PC-3 (cell line): ENCODE measurements at regions of chr5 and their contacts with region 1.

Region 1: GRCh38 chr5:103258368-103258956 is at the start of gene MACIR:
- DNase-seq: peak; percentile 99
- ATAC-seq: peak; percentile 85
- H3K4me3 ChIP-seq: peak within 1 kb of the TSS; percentile 93
- H3K27ac ChIP-seq: peak within 1 kb of the TSS; percentile 63
- H3K4me1 ChIP-seq: peaks cover 34% of the 10 kb centered on the region
- H3K27me3 ChIP-seq: no peaks in the 10 kb centered on the region
- CTCF ChIP-seq: 0 out of 2 replicates have a peak, but pooled peaks have one; percentile 9
- total RNA-seq, gene MACIR: 15.1 and 22.2 TPM in 2 replicates

Region 2: GRCh38 chr5:103232393-103232999 is 26.0 kb before region 1 on chr5:
- CTCF ChIA-PET with region 1: interaction called, 4 read pairs
- POLR2A ChIA-PET with region 1: no interaction called
- intact Hi-C with region 1: loop called (anchors 2 kb)
- DNase-seq: peak; percentile 77
- ATAC-seq: peak; percentile 90
- H3K4me3 ChIP-seq: no peak overlapping the region
- H3K27ac ChIP-seq: no peak overlapping the region
- H3K4me1 ChIP-seq: 0 out of 2 replicates have a peak, but pooled peaks cover 4% of the 10 kb centered on the region
- H3K27me3 ChIP-seq: no peaks in the 10 kb centered on the region
- CTCF ChIP-seq: peak; percentile 97

Region 3: GRCh38 chr5:103357636-103358035 is 99.2 kb after region 1 on chr5:
- CTCF ChIA-PET with region 1: interaction called, 13 read pairs
- POLR2A ChIA-PET with region 1: no interaction called
- intact Hi-C with region 1: loop called (anchors 1 kb)
- DNase-seq: no peak
- ATAC-seq: no peak
- H3K4me3 ChIP-seq: no peak overlapping the region
- H3K27ac ChIP-seq: no peak overlapping the region
- H3K4me1 ChIP-seq: peaks cover 10% of the 10 kb centered on the region; the same call in 1 of the 2 replicates
- H3K27me3 ChIP-seq: no peaks in the 10 kb centered on the region
- CTCF ChIP-seq: no peak

Region 4: DNA sequence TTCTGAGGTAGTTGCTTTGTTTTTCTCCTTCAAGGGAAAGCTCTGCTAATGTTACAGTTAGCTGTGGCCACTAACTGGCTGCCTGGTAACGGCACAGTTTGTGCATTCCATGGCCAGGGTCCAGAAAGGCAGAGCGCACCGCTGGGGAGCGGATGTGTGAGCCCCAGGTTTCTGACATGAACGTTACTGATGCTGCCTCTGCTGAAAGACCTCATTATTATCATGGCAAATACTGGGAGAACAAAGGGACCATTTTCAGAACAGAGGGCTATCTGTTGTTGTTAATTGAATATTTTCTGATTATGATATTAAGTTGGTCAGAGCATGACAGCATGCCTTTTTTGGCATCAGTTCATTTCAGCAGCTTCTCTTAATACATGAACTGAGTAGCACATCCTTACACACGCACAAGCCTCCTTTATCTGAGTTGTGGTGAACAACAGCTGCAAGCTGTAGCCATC is 170.0 kb after region 1 on chr5:
- CTCF ChIA-PET with region 1: no interaction called
- POLR2A ChIA-PET with region 1: interaction called, 17 read pairs
- intact Hi-C with region 1: no loop called
- DNase-seq: peak; percentile 43
- ATAC-seq: peak; percentile 62
- H3K4me3 ChIP-seq: no peak overlapping the region
- H3K27ac ChIP-seq: no peak overlapping the region
- H3K4me1 ChIP-seq: peaks cover 17% of the 10 kb centered on the region
- H3K27me3 ChIP-seq: no peaks in the 10 kb centered on the region
- CTCF ChIP-seq: no peak

Region 5: GRCh38 chr5:103562453-103563157 is 304.1 kb after region 1 on chr5 and contains the start of gene NUDT12:
- CTCF ChIA-PET with region 1: no interaction called
- POLR2A ChIA-PET with region 1: interaction called, 9 read pairs
- intact Hi-C with region 1: loop called (anchors 1 kb)
- DNase-seq: peak; percentile 86
- ATAC-seq: peak; percentile 91
- H3K4me3 ChIP-seq: peak within 1 kb of the TSS; percentile 77
- H3K27ac ChIP-seq: peak within 1 kb of the TSS; percentile 76
- H3K4me1 ChIP-seq: peaks cover 16% of the 10 kb centered on the region
- H3K27me3 ChIP-seq: no peaks in the 10 kb centered on the region
- CTCF ChIP-seq: no peak
- total RNA-seq, gene NUDT12: 9.2 and 10.9 TPM in 2 replicates